Breast epithelium (tissue), 4 donors: ENCODE measurements at regions of chr12 and their contacts with region 1.

Region 1: GRCh38 chr12:114668151-114668885 is 15.7 kb downstream of the TBX3 start:
- DNase-seq: peak; percentile 84 to 94
- H3K4me3 ChIP-seq: peak overlapping the region; percentile 33 to 84 (median 52)
- H3K27ac ChIP-seq: peak overlapping the region; percentile 85 to 97
- H3K4me1 ChIP-seq: peaks cover 0 to 2% of the 10 kb centered on the region in 2 donors
- H3K27me3 ChIP-seq: peaks cover 0 to 8% of the 10 kb centered on the region in 2 donors
- CTCF ChIP-seq: peak; percentile 56 to 66 (median 60)
- POLR2A ChIP-seq: no peak

Region 2: GRCh38 chr12:114209861-114210260 is 458.5 kb before region 1 on chr12:
- intact Hi-C with region 1: no loop called
- DNase-seq: no peak
- H3K4me3 ChIP-seq: no peak overlapping the region
- H3K27ac ChIP-seq: no peak overlapping the region
- H3K4me1 ChIP-seq: no peaks in the 10 kb centered on the region
- H3K27me3 ChIP-seq: peaks cover 0 to 23% of the 10 kb centered on the region in 2 donors
- CTCF ChIP-seq: no peak
- POLR2A ChIP-seq: no peak

Region 3: GRCh38 chr12:114682785-114683708 is 14.7 kb after region 1 on chr12:
- intact Hi-C with region 1: loop called (anchors 1 kb)
- DNase-seq: no peak
- H3K4me3 ChIP-seq: peak overlapping the region; percentile 63 to 84 (median 73)
- H3K27ac ChIP-seq: peak overlapping the region; percentile 93 to 96
- H3K4me1 ChIP-seq: no peaks in the 10 kb centered on the region
- H3K27me3 ChIP-seq: peaks cover 0 to 8% of the 10 kb centered on the region in 2 donors
- CTCF ChIP-seq: no peak
- POLR2A ChIP-seq: no peak

Region 4: GRCh38 chr12:115752913-115753726 is 1084.8 kb after region 1 on chr12:
- intact Hi-C with region 1: loop called (anchors 5 kb)
- DNase-seq: peak; percentile 48 to 52
- H3K4me3 ChIP-seq: no peak overlapping the region
- H3K27ac ChIP-seq: peak overlapping the region; percentile 26 to 36
- H3K4me1 ChIP-seq: peaks cover 3 to 5% of the 10 kb centered on the region in 2 donors
- H3K27me3 ChIP-seq: no peaks in the 10 kb centered on the region
- CTCF ChIP-seq: peak; percentile 29 to 80 (median 79)
- POLR2A ChIP-seq: no peak